ENCODE measurements at regions of chr14 and their contacts with region 1.

Region 1: GRCh38 chr14:60632777-60633176 is 16.5 kb downstream of the SIX1 start:
- DNase-seq: no peak
- H3K4me3 ChIP-seq: no peak overlapping the region
- H3K27ac ChIP-seq: no peak overlapping the region
- H3K4me1 ChIP-seq: peaks cover 0 to 7% (median 5%) of the 10 kb centered on the region in 4 donors
- H3K27me3 ChIP-seq: peaks cover 53% of the 10 kb centered on the region
- CTCF ChIP-seq: no peak
- EP300 ChIP-seq: no peak
- POLR2A ChIP-seq: no peak

Region 2: DNA sequence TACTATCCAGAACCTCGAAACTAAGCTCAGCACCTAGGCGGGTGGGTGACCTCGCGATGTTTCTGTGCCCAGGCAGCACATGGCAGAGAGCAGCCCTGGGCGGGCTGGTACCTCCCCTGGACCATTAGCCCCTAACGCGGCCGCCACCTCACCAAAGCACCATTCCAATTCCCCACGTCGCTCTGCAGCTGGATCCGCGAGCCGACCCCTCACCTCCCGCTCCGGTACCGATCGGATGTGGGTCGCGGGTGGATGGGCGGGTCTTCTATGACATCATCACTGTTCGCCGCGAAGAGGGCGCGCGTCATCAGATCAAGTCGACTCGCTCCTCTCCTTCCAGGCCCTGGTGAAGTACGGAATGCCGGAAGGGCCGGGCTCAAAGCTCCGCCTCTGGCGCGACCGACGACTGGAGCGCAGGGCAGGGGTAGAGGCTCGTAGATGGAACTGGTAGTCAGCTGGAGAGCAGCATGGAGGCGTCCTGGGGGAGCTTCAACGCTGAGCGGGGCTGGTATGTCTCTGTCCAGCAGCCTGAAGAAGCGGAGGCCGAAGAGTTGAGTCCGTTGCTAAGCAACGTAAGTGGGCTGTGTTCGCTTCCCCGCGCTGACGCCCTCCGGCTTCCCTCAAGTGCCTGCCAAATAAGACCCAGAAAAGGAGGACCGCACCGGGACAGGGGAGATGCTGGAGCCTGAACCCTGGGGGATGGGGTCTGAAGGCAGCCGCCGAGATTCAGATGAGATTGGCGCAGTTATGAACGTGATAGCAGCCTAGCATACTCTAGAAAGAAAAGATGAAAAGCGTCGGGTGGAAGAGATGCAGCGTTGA is 348.2 kb after region 1 on chr14 and contains the starts of genes SLC38A6 and TRMT5:
- in situ Hi-C with region 1: no loop called
- intact Hi-C with region 1: no loop called
- DNase-seq: peak; percentile 95
- H3K4me3 ChIP-seq: peak within 1 kb of the TSS; percentile 56 to 92 (median 65)
- H3K27ac ChIP-seq: peak within 1 kb of the TSS; percentile 80 to 88 (median 84)
- H3K4me1 ChIP-seq: peaks cover 5 to 27% (median 9%) of the 10 kb centered on the region in 4 donors
- H3K27me3 ChIP-seq: no peaks in the 10 kb centered on the region
- CTCF ChIP-seq: no peak
- EP300 ChIP-seq: no peak
- POLR2A ChIP-seq: peak; percentile 61
- total RNA-seq, gene SLC38A6: 7.9 to 20.6 (median 10.0) TPM in 3 of 4 donors, not detected in the other
- total RNA-seq, gene TRMT5: 0.75 to 13.5 (median 6.5) TPM

Region 3: GRCh38 chr14:61019537-61019936 is 386.8 kb after region 1 on chr14:
- in situ Hi-C with region 1: loop called in 3 of 4 experiments (anchors 5 to 10 kb)
- intact Hi-C with region 1: loop called (anchors 10 kb)
- DNase-seq: no peak
- H3K4me3 ChIP-seq: no peak overlapping the region
- H3K27ac ChIP-seq: no peak overlapping the region
- H3K4me1 ChIP-seq: no peaks in the 10 kb centered on the region
- H3K27me3 ChIP-seq: no peaks in the 10 kb centered on the region
- CTCF ChIP-seq: no peak
- EP300 ChIP-seq: no peak
- POLR2A ChIP-seq: no peak

Region 4: DNA sequence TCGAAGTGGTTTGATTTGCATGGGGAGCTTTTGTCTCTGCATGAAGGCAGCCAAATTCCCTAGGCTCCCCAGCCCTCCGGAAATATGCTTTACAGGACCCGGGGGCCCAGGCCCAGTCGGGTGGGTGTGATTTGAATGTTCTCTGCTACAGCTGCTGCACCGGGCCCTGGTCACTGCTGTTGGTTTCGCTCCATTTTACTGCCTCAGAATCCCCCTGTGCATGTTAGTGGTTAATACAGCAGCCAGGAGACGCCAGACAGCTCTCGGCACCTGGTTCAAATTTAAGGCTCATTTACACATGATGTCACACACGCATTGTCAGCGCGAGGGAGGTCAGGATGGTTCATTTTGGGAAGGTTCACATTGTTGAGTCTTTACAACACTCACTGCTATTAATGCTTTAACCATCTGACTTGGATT is 447.8 kb after region 1 on chr14:
- in situ Hi-C with region 1: no loop called
- intact Hi-C with region 1: no loop called
- DNase-seq: no peak
- H3K4me3 ChIP-seq: no peak overlapping the region
- H3K27ac ChIP-seq: no peak overlapping the region
- H3K4me1 ChIP-seq: no peaks in the 10 kb centered on the region
- H3K27me3 ChIP-seq: no peaks in the 10 kb centered on the region
- CTCF ChIP-seq: no peak
- EP300 ChIP-seq: no peak
- POLR2A ChIP-seq: no peak

Region 5: GRCh38 chr14:61252369-61253063 is 619.7 kb after region 1 on chr14:
- in situ Hi-C with region 1: loop called (anchors 5 to 10 kb)
- intact Hi-C with region 1: no loop called
- DNase-seq: peak; percentile 56
- H3K4me3 ChIP-seq: no peak overlapping the region
- H3K27ac ChIP-seq: no peak overlapping the region
- H3K4me1 ChIP-seq: no peaks in the 10 kb centered on the region
- H3K27me3 ChIP-seq: peaks cover 17% of the 10 kb centered on the region
- CTCF ChIP-seq: peak; percentile 58 to 69 (median 64)
- EP300 ChIP-seq: no peak
- POLR2A ChIP-seq: no peak

Measured in transverse colon (tissue), 4 donors.